ENCODE measurements at regions of chr5 and their contacts with region 1.

Region 1: GRCh38 chr5:43105369-43106289 is 15.1 kb upstream of the ZNF131 start:
- DNase-seq: peak; percentile 91
- ATAC-seq: peak; percentile 95

Region 2: DNA sequence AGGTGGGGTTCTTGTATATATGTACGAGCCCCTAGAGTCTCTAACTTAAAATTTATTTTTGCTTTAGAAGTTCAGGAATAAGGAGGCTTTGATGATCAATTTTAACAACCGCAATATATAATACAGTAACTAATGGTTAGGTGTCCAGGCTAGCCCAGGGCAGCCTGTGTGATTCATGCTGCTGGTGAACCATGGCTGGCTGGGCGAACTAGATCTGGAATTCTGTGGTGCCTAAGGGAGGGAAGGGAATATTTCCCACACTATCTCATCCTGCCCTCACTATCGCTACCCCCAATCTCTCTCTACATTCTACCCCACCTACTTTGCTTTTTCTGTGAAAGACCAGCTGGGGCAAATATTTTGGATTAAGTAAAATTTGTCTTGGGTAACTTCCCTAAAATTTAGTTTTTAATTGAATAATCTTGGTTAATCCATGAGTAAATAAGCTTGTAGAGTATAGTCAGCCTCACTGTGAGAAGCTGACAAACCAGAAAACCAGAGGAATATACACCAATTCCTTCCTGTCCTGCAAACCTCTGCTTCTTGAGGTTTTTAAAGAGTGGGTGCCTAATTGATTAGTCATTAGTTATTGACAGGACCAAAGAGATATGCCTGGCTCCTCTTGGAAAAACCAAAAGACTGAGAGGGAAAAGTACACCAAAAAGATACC is 464.2 kb before region 1 on chr5:
- intact Hi-C with region 1: no loop called
- DNase-seq: no peak
- ATAC-seq: no peak

Region 3: DNA sequence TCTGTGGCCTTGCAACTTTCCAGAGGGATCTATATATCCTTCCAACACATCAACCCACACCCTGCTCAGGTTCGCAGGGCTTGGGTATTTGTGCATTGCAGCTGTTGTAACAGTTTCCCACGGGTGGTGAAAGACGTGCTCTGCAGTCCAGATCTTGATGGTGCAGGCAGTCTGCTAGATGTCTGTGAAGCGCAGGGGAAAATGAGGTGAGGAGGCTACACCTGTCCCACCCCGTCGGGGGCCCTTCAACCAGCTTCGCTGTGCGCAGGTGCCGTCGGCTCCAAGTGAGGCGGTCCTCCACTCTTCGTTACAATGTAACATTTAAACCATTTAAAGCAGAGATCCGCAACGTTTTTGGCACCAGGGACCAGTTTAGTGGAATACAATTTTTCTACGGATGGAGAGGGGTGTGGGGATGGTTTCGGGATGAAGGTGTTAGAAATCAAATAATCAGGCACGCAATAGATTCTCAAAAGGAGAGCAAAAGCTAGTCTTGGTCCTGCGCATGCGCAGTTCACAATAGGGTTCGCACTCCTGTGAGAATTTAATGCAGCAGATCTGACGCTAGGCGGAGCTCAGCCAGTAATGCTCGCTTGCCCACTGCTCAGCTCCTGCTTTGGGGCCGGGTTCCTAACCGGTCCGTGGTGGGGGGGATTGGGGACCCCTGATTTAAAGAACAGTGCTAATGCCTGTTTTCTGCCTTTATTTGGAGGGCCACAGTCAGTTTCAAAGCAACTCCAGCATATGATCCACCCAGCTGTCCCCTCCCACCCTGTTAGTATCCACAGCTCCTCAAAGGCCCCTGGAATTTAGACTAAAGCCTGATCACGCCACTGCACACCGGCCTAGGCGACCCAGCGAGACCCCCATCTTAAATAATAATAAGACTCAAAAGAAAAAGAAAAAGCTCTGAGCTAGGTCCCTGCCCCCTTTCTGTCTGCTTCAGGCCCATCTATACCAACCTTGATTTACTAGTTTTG is 196.8 kb before region 1 on chr5:
- intact Hi-C with region 1: loop called (anchors 5 kb)
- DNase-seq: peak; percentile 96
- ATAC-seq: peak; percentile 93